HEK293T (cell line): ENCODE measurements at regions of chr4 and their contacts with region 1.

Region 1: GRCh38 chr4:108637856-108638255 is 12.5 kb upstream of the OSTC start:
- DNase-seq: no peak

Region 2: DNA sequence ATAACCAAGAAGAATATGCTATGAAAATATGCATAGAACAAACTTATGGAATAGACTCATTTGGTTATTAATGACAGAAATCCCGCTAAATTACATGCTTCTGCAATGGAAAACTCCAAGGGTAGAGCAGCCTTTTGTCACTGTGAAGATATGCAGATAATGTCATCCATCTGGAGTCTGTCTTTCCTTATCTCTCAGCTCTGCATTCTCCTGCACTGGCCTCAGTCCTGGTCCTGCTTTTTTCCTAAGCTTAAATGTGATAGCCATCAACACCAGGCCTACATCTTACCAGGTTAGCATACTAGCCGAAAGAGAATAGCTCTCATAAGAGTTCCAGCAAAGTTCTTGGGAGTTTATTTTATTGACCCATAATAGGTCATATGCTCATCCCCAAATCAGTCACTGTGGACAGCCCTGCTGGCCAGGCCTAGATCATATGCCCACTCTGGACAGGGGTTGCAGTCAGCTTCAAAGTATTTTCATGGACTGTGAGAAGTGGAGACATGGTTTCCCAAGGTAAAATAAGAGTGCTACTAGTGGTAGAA is 382.6 kb before region 1 on chr4:
- CTCF ChIA-PET with region 1: no interaction called
- POLR2A ChIA-PET with region 1: no interaction called
- DNase-seq: no peak

Region 3: DNA sequence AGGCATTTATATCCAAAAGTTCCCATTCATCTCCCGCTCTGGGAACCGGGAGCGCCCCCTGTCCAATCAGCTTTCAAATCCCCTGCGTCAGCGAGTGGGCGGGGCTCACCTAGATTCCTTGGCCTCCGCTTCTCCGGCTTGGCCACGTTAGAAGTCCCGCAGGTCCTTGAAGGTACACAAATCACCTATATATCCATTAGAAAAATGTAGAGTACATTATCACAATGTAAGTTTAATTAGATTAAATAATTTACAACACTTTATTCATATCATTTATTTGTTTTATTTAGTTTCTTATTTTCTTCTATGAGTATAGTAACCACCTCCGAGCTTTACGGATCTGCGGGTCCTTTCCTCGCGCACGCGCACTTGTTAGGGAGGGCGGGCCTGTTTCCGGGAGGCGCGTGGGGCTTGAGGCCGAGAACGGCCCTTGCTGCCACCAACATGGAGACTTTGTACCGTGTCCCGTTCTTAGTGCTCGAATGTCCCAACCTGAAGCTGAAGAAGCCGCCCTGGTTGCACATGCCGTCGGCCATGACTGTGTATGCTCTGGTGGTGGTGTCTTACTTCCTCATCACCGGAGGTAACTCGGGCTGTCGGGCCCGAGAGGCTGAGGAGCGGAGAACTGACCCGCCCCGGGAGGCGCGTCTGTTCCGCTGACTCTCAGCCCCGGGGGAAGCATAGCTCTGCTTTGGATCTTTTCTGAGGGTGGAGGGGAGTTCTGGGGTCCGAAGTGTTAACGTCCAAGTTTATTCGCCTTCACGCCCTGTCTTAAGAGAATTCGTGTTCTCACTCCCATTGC is 12.6 kb after region 1 on chr4 and contains the start of gene OSTC:
- CTCF ChIA-PET with region 1: interaction called, 4 read pairs
- POLR2A ChIA-PET with region 1: interaction called, 10 read pairs
- DNase-seq: peak; percentile 93

Region 4: GRCh38 chr4:108742451-108743420 is 104.9 kb after region 1 on chr4:
- CTCF ChIA-PET with region 1: no interaction called
- POLR2A ChIA-PET with region 1: no interaction called
- DNase-seq: no peak